PC-9 (cell line): ENCODE measurements at regions of chr13 and their contacts with region 1.

Region 1: GRCh38 chr13:21359855-21360254 is 99.2 kb downstream of the ZDHHC20 start:
- DNase-seq: no peak
- H3K4me3 ChIP-seq: no peak overlapping the region
- H3K27ac ChIP-seq: no peak overlapping the region
- H3K4me1 ChIP-seq: no peaks in the 10 kb centered on the region
- H3K27me3 ChIP-seq: no peaks in the 10 kb centered on the region; the same call in 1 of the 2 replicates
- CTCF ChIP-seq: no peak

Region 2: GRCh38 chr13:21338156-21338555 is 21.7 kb before region 1 on chr13:
- CTCF ChIA-PET with region 1: no interaction called
- POLR2A ChIA-PET with region 1: no interaction called
- intact Hi-C with region 1: loop called (anchors 2 kb)
- DNase-seq: no peak
- H3K4me3 ChIP-seq: no peak overlapping the region
- H3K27ac ChIP-seq: no peak overlapping the region
- H3K4me1 ChIP-seq: no peaks in the 10 kb centered on the region
- H3K27me3 ChIP-seq: no peaks in the 10 kb centered on the region
- CTCF ChIP-seq: no peak